Heart left ventricle (tissue), 16 donors: ENCODE measurements at regions of chr1 and their contacts with region 1.

Region 1: GRCh38 chr1:2545759-2546514 is 10.2 kb upstream of the TNFRSF14 start:
- DNase-seq: peak; percentile 91 to 95 (median 92)
- ATAC-seq: peak; percentile 53 to 66 (median 58)
- H3K4me3 ChIP-seq: peak overlapping the region; percentile 22 to 86 (median 58)
- H3K27ac ChIP-seq: peak overlapping the region; percentile 87 to 99 (median 96)
- H3K4me1 ChIP-seq: peaks cover 23 to 84% (median 63%) of the 10 kb centered on the region in 12 donors
- H3K27me3 ChIP-seq: peaks cover 0 to 8% (median 2%) of the 10 kb centered on the region in 9 donors
- CTCF ChIP-seq: no peak
- POLR2A ChIP-seq: peak in 1 of 2 donors; percentile 28

Region 2: DNA sequence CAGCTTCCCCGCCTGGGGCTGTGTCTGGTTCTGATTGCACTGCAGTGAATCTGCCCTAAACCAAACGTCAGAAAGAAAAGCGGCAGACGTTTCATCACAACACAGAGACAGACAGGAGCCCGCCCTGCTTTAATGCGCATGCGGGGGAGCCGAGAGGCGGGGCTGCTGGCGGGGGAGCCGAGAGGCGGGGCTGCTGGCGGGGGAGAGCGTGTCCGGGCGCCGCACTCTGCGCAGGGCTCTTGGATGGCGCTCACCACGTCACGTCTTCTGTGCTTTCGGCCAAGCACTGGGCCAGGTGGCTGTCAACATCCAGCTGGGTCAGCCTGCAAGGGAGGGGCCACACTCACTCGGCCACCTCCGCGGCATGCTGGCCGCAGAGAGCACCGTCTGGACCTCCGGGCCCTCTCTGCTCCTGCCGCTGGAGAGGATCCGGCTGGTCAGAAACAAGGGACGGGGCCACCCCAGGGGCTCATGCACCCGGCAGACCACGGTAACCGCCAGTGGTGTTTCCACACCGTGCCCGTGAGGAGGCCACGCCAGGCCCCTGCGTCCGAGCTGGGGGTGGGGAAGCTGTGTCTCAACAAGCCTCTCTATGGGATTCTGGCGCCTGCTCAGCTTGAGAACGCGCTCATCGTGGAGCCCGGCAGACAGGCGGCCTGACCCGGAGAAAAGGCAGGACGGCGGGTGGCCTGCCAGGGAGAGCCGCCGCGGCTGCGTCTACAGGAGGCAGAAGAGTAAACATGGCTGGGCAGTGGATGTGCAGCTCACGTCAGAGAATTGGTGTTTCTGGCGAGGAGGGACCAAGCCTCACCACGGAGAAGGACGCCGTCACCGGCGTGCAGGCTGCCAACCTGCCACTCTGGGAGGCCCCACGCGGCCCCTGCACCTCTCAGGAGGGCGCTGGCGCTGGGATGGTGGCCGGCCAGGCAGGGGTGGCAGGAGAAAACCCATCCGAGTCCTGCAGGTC is 356.2 kb before region 1 on chr1:
- intact Hi-C with region 1: loop called in 3 of 10 experiments (anchors 10 kb)
- DNase-seq: peak; percentile 93 to 97 (median 96)
- ATAC-seq: peak; percentile 87 to 94 (median 92)
- H3K4me3 ChIP-seq: peak overlapping the region; percentile 4 to 68 (median 60)
- H3K27ac ChIP-seq: peak overlapping the region; percentile 80 to 98 (median 94)
- H3K4me1 ChIP-seq: peaks cover 4 to 52% (median 37%) of the 10 kb centered on the region in 12 donors
- H3K27me3 ChIP-seq: no peaks in the 10 kb centered on the region
- CTCF ChIP-seq: peak in 1 of 12 donors; percentile 18
- POLR2A ChIP-seq: peak; percentile 58 to 82

Region 3: GRCh38 chr1:2205191-2205952 is 340.6 kb before region 1 on chr1:
- intact Hi-C with region 1: loop called in 1 of 10 experiments (anchors 10 kb)
- DNase-seq: peak; percentile 98 to 99 (median 98)
- ATAC-seq: peak; percentile 72 to 85 (median 80)
- H3K4me3 ChIP-seq: peak overlapping the region in 11 of 12 donors; percentile 23 to 64 (median 52)
- H3K27ac ChIP-seq: peak overlapping the region; percentile 48 to 96 (median 88)
- H3K4me1 ChIP-seq: peaks cover 10 to 68% (median 51%) of the 10 kb centered on the region in 12 donors
- H3K27me3 ChIP-seq: no peaks in the 10 kb centered on the region
- CTCF ChIP-seq: peak in 5 of 12 donors; percentile 7 to 32 (median 9)
- POLR2A ChIP-seq: peak in 1 of 2 donors; percentile 51

Region 4: GRCh38 chr1:2360588-2361364 is 185.2 kb before region 1 on chr1:
- intact Hi-C with region 1: no loop called
- DNase-seq: peak in 1 of 5 donors; percentile 7
- ATAC-seq: no peak
- H3K4me3 ChIP-seq: no peak overlapping the region
- H3K27ac ChIP-seq: no peak overlapping the region
- H3K4me1 ChIP-seq: no peaks in the 10 kb centered on the region
- H3K27me3 ChIP-seq: no peaks in the 10 kb centered on the region
- CTCF ChIP-seq: no peak
- POLR2A ChIP-seq: no peak

Region 5: GRCh38 chr1:2525920-2526823 is 19.8 kb before region 1 on chr1 and contains the start of gene PANK4:
- intact Hi-C with region 1: loop called in 4 of 10 experiments (anchors 1 to 2 kb)
- DNase-seq: peak; percentile 94 to 97 (median 94)
- ATAC-seq: peak; percentile 87 to 90 (median 88)
- H3K4me3 ChIP-seq: peak within 1 kb of the TSS; percentile 72 to 97 (median 86)
- H3K27ac ChIP-seq: peak within 1 kb of the TSS; percentile 61 to 92 (median 86)
- H3K4me1 ChIP-seq: peaks cover 29 to 76% (median 68%) of the 10 kb centered on the region in 12 donors
- H3K27me3 ChIP-seq: peaks cover 0 to 31% (median 0%) of the 10 kb centered on the region in 9 donors
- CTCF ChIP-seq: peak in 3 of 12 donors; percentile 17 to 38 (median 20)
- POLR2A ChIP-seq: peak; percentile 68 to 75
- total RNA-seq, gene PANK4: 27.2 to 43.0 (median 36.6) TPM

Region 6: DNA sequence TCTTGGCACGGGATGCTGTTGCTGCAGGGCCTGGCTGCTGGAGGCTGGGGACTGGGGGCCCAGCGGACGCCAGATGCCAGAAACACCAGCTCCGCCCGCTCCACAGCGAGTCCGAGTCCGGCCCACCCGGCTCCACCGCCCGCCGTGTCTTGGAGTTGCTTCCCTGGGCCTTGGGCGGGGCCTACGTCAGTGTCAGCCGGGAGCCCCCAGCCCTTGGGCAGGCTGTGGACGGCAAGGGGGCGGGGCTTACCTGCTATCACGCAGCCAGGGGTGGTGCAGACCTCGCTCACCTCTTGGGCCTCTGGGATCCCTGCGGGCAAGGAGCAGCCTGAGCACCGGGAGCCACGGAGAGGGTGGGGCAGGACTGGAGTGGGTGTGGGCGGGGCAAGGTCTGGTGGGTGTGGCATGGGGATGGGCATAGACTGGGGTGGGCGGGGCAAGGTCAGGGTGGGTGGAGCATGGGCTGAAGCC is 65.1 kb after region 1 on chr1:
- intact Hi-C with region 1: no loop called
- DNase-seq: peak in 3 of 5 donors; percentile 16 to 67 (median 30)
- ATAC-seq: peak in 1 of 4 donors; percentile 47
- H3K4me3 ChIP-seq: peak overlapping the region in 1 of 12 donors; percentile 6
- H3K27ac ChIP-seq: no peak overlapping the region
- H3K4me1 ChIP-seq: peaks cover 0 to 10% (median 2%) of the 10 kb centered on the region in 12 donors
- H3K27me3 ChIP-seq: peaks cover 0 to 28% (median 0%) of the 10 kb centered on the region in 9 donors
- CTCF ChIP-seq: no peak
- POLR2A ChIP-seq: no peak

Region 7: DNA sequence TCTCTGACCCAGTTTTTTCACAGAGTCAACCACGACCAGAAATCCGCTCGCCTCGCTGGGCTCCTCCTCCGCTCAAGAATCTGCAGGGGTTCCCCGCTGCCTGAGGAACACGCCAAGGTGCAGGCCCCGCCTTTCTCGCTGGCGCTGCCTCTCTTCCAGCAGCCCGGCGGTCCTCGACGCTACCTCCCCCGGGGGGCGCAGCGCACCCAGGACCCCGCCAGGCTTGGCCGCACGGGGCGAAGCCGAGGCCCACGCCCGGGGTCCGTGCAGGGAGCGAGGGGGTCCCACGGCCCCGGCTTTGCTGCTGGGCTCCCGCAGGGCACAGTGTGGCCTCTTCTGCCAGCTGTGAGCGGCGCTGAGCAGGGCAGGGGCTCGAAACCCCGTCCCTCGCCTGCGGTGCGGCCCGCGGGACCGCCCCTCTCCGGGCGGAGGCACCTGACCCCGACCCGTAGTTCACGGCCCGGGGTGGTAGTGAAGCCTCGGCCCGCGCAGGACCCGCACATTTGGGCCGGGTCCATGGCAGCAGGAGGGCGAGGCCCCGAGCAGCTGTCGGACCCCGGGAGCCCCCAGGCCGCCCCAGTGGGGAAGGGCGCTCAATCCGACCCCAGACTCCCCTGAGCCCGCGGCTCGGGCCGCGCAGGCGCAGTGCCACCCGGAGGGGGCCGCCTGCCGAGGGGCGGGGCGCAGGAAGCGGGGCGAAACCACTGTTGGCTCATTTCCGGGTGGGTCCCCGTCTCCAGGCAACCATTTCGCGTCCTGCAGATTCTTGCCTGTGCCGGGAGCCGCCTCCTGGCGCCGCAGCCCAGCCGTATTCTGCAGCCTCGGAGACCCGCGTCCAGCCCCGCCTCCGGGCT is 96.8 kb after region 1 on chr1:
- intact Hi-C with region 1: loop called in 1 of 10 experiments (anchors 10 kb)
- DNase-seq: peak; percentile 94 to 96 (median 94)
- ATAC-seq: peak; percentile 66 to 95 (median 87)
- H3K4me3 ChIP-seq: peak overlapping the region; percentile 68 to 99 (median 85)
- H3K27ac ChIP-seq: peak overlapping the region; percentile 56 to 94 (median 88)
- H3K4me1 ChIP-seq: peaks cover 0 to 31% (median 14%) of the 10 kb centered on the region in 12 donors
- H3K27me3 ChIP-seq: no peaks in the 10 kb centered on the region
- CTCF ChIP-seq: peak in 6 of 12 donors; percentile 13 to 47 (median 27)
- POLR2A ChIP-seq: peak; percentile 8 to 88